Esophagus squamous epithelium (tissue), 5 donors: ENCODE measurements at regions of chr20 and their contacts with region 1.

Region 1: DNA sequence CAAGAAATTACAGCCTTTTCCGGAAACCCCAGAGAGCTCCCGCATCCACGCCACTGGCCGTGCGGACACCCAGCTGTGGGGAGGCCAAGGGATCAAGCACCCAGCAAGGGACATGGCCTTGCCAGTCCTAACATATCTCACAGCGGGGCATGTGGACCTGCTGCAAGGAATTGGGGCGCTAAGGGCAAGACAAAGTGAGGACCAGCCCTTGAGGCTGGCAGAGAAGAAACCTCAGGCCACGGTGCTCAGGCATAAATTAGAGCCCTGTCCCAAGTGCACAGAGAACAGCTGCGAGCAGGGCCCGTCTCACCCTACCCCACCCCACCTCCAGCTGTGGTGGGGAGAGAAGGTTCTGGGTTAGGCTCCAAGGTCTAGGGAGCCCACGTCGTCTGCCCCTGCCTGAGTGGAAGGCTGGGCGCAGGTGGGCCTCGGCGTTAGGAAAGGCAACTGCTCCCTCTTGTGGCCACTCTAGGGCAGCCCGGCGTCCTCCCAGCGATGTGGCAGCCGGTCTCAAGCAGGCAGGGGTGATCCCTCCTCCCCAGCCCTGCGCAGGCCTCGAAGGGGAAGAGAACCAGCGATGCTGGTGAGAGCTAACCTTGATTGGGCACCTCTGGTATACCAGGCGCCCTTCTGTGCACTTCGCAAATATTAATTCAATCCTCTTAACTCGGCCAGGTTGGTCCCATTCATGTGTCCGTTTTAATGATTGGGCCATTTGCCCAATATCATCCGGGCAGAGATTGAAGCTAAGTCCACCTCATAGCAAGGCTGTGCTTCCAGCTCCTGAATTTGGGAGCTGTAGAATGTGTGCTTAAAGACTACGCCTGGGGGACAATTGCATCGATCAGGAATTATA is 235.8 kb downstream of the NFATC2 start:
- DNase-seq: no peak
- H3K4me3 ChIP-seq: peak overlapping the region in 1 of 4 donors; percentile 12
- H3K27ac ChIP-seq: no peak overlapping the region
- H3K4me1 ChIP-seq: peaks cover 0 to 11% (median 7%) of the 10 kb centered on the region in 3 donors
- H3K27me3 ChIP-seq: peaks cover 0 to 21% (median 0%) of the 10 kb centered on the region in 4 donors
- CTCF ChIP-seq: peak; percentile 56 to 93 (median 90)
- POLR2A ChIP-seq: no peak

Region 2: DNA sequence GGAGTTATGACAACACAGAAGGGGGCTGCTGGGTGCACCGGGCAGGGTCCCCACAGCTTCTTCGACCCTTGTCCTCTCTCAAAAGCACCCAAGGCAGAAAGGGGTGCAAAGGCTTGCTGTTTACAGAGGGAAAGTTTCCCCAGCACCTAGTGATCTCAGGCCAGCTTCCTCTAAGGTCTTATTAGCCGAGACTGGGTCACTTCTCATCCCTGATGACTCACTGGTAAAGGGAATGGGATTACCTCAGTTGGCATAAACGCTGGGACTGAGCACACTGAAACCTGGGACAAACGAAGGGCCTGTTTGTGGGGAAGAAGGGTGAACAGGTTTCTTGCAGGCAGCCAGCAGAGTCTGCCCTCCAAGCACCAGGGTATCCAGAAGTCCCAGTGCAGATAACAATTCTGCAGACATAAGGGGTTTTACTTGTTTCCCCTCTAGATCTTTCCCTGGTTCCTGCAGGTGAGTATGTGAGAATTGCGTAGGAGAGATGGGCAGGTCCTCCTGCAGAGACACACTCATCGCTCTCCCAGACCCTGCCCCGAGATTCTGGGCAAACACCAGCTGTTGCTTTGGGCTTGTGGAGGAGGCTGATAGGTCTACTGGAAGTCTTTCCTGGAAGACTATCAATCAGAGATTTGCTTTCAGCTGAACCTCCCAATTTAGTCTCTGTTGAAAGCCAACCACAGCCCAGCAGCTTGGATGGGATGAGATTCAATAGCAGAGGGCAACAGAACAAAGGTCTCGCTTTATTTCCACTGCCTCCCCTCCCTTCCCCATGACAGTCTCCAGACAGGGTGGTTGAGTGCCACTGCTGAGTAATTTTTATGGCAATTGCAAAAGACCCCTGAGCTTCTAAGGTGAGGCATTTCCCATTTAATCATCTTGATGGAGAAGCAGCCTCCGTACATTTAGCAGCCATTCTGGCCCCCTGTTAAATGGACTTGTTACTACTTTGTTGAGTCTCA is 309.5 kb before region 1 on chr20:
- intact Hi-C with region 1: loop called (anchors 5 kb)
- DNase-seq: no peak
- H3K4me3 ChIP-seq: no peak overlapping the region
- H3K27ac ChIP-seq: no peak overlapping the region
- H3K4me1 ChIP-seq: peaks cover 4 to 9% (median 6%) of the 10 kb centered on the region in 3 donors
- H3K27me3 ChIP-seq: peaks cover 0 to 28% (median 0%) of the 10 kb centered on the region in 4 donors
- CTCF ChIP-seq: no peak
- POLR2A ChIP-seq: no peak

Region 3: DNA sequence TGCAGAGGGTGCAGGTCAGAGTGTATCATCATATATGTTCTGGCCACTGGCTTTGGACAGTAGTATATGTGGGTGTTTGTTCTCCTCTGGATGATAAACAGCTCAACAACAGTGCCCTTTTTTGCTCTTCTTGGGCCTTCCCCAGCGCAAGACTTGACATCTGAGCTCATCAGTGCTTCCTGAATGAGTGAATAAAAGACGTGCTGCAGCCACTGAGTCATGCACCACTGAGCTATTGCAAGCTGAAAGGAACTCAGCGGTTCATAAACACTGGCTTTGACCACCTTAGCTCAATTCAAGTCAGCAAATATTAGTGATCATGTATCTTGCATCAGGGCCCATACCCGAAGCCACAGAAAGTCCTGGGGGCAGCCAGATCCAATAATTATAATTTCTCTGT is 178.5 kb before region 1 on chr20:
- intact Hi-C with region 1: no loop called
- DNase-seq: no peak
- H3K4me3 ChIP-seq: no peak overlapping the region
- H3K27ac ChIP-seq: peak overlapping the region in 3 of 4 donors; percentile 37 to 86 (median 81)
- H3K4me1 ChIP-seq: peaks cover 11 to 65% (median 12%) of the 10 kb centered on the region in 3 donors
- H3K27me3 ChIP-seq: no peaks in the 10 kb centered on the region
- CTCF ChIP-seq: no peak
- POLR2A ChIP-seq: no peak

Region 4: GRCh38 chr20:51142415-51142814 is 164.3 kb before region 1 on chr20:
- intact Hi-C with region 1: no loop called
- DNase-seq: no peak
- H3K4me3 ChIP-seq: no peak overlapping the region
- H3K27ac ChIP-seq: no peak overlapping the region
- H3K4me1 ChIP-seq: peaks cover 0 to 8% (median 0%) of the 10 kb centered on the region in 3 donors
- H3K27me3 ChIP-seq: peaks cover 0 to 14% (median 0%) of the 10 kb centered on the region in 4 donors
- CTCF ChIP-seq: no peak
- POLR2A ChIP-seq: no peak

Region 5: GRCh38 chr20:51220293-51220706 is 86.4 kb before region 1 on chr20:
- intact Hi-C with region 1: loop called (anchors 10 kb)
- DNase-seq: no peak
- H3K4me3 ChIP-seq: no peak overlapping the region
- H3K27ac ChIP-seq: no peak overlapping the region
- H3K4me1 ChIP-seq: peaks cover 0 to 18% (median 3%) of the 10 kb centered on the region in 3 donors
- H3K27me3 ChIP-seq: peaks cover 0 to 56% (median 0%) of the 10 kb centered on the region in 4 donors
- CTCF ChIP-seq: peak; percentile 54 to 84 (median 73)
- POLR2A ChIP-seq: no peak